Kidney (tissue), 22 donors: ENCODE measurements at regions of chr1 and their contacts with region 1.

Region 1: DNA sequence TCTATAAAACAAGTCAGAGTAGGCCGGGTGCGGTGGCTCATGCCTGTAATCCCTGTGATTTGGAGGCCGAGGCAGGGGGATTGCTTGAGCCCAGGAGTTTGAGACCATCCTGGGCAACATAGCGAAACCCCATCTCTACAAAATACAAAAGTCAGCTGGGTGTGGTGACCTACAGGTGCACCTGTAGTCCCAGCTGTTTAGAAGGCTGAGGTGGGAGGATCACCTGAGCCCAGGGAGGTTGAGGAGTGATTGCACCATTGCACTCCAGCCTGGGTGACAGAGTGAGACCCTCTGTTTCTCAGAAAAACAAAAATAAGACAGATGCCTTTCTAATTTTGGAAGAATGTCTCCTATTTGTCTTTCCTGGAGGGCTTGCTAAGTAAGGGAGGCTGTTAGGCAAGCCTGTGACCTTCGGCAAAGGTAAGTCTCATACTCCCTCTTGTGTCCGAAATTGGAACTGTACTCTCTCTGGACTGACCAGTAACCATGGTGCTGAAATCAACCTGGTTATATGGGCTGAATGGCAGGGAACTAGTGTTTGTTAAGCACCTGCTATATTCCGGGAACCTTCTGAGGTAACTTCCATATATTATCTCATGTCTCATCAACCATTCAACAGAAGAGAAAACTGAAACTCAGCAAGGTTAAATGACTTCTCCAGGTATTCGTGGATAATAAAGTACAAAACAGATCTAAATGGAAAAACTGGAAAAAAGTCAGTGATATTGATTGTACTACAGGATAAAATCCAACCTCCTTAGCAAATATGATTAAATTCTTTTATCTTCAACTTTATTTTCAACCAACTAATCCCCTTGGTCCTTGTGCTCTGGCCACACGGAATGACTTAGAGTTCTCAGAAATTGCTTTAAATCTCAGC is 11.8 kb upstream of the RAB3B start:
- DNase-seq: peak in 4 of 5 donors; percentile 58 to 94 (median 83)
- H3K4me3 ChIP-seq: no peak overlapping the region
- H3K27ac ChIP-seq: no peak overlapping the region
- H3K4me1 ChIP-seq: peaks cover 0 to 5% (median 4%) of the 10 kb centered on the region in 3 donors
- H3K27me3 ChIP-seq: no peaks in the 10 kb centered on the region
- CTCF ChIP-seq: peak; percentile 95

Region 2: GRCh38 chr1:51648180-51649109 is 353.8 kb before region 1 on chr1:
- intact Hi-C with region 1: no loop called
- DNase-seq: peak in 1 of 5 donors; percentile 10
- H3K4me3 ChIP-seq: peak overlapping the region in 1 of 3 donors; percentile 5
- H3K27ac ChIP-seq: no peak overlapping the region
- H3K4me1 ChIP-seq: peaks cover 5 to 12% (median 6%) of the 10 kb centered on the region in 3 donors
- H3K27me3 ChIP-seq: no peaks in the 10 kb centered on the region
- CTCF ChIP-seq: no peak

Region 3: GRCh38 chr1:51906306-51907078 is 95.8 kb before region 1 on chr1:
- intact Hi-C with region 1: loop called (anchors 10 kb)
- DNase-seq: no peak
- H3K4me3 ChIP-seq: no peak overlapping the region
- H3K27ac ChIP-seq: no peak overlapping the region
- H3K4me1 ChIP-seq: no peaks in the 10 kb centered on the region
- H3K27me3 ChIP-seq: no peaks in the 10 kb centered on the region
- CTCF ChIP-seq: no peak